Gastrocnemius medialis (tissue), 4 donors: ENCODE measurements at regions of chr14 and their contacts with region 1.

Region 1: GRCh38 chr14:72714094-72714493 is 179.8 kb downstream of the DPF3 start:
- DNase-seq: no peak
- ATAC-seq: no peak
- H3K4me3 ChIP-seq: no peak overlapping the region
- H3K27ac ChIP-seq: peak overlapping the region; percentile 90 to 94 (median 92)
- H3K4me1 ChIP-seq: peaks cover 41 to 49% of the 10 kb centered on the region in 2 donors
- H3K27me3 ChIP-seq: no peaks in the 10 kb centered on the region
- CTCF ChIP-seq: no peak
- POLR2A ChIP-seq: no peak

Region 2: DNA sequence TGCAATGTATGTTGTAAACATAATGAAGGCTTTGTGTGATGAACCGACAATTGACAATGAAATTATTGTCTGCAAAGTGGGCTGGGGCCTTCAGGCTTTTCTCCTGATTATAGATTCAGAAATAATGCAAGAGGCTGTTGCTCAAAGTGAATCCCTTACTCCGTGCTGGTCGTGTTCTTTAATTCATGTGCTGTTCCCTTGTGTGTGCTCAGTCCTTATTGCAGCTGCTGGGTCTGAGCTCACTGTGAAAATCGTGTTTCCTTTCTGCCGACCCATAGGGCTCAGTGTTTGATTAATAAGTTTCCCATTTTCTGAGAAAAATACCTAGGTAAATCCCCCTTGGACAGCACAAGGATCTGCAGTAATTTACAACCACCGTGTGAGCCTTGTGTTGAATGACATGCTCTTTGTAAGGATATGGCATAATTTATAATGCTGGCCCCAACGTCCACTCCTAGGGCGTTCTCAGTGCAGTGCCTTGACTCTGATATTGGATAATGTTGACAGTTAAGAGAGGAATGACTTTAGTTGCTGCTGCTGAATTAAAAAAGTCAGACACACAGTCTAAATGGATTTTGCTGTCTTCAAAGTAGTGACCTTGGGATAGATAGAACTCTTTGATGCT is 700.3 kb before region 1 on chr14:
- in situ Hi-C with region 1: no loop called
- intact Hi-C with region 1: no loop called
- DNase-seq: no peak
- ATAC-seq: no peak
- H3K4me3 ChIP-seq: no peak overlapping the region
- H3K27ac ChIP-seq: no peak overlapping the region
- H3K4me1 ChIP-seq: no peaks in the 10 kb centered on the region
- H3K27me3 ChIP-seq: no peaks in the 10 kb centered on the region
- CTCF ChIP-seq: no peak
- POLR2A ChIP-seq: no peak

Region 3: GRCh38 chr14:72560331-72560730 is 153.8 kb before region 1 on chr14:
- in situ Hi-C with region 1: no loop called
- intact Hi-C with region 1: loop called (anchors 5 kb)
- DNase-seq: no peak
- ATAC-seq: no peak
- H3K4me3 ChIP-seq: no peak overlapping the region
- H3K27ac ChIP-seq: peak overlapping the region in 1 of 4 donors; percentile 10
- H3K4me1 ChIP-seq: peaks cover 32 to 45% of the 10 kb centered on the region in 2 donors
- H3K27me3 ChIP-seq: no peaks in the 10 kb centered on the region
- CTCF ChIP-seq: no peak
- POLR2A ChIP-seq: no peak

Region 4: GRCh38 chr14:72893636-72894321 is 179.7 kb after region 1 on chr14 and contains the start of gene DPF3:
- in situ Hi-C with region 1: no loop called
- intact Hi-C with region 1: loop called (anchors 2 kb)
- DNase-seq: peak; percentile 97 to 98
- ATAC-seq: peak; percentile 88 to 91
- H3K4me3 ChIP-seq: peak within 1 kb of the TSS; percentile 89 to 99 (median 96)
- H3K27ac ChIP-seq: peak within 1 kb of the TSS; percentile 91 to 94 (median 94)
- H3K4me1 ChIP-seq: peaks cover 48 to 51% of the 10 kb centered on the region in 2 donors
- H3K27me3 ChIP-seq: no peaks in the 10 kb centered on the region
- CTCF ChIP-seq: no peak
- POLR2A ChIP-seq: peak; percentile 86 to 98
- total RNA-seq, gene DPF3: 16.7 to 27.8 (median 20.3) TPM

Region 5: GRCh38 chr14:72904840-72905561 is 190.9 kb after region 1 on chr14:
- in situ Hi-C with region 1: no loop called
- intact Hi-C with region 1: loop called (anchors 2 kb)
- DNase-seq: peak; percentile 49 to 72
- ATAC-seq: peak; percentile 48 to 49
- H3K4me3 ChIP-seq: no peak overlapping the region
- H3K27ac ChIP-seq: peak overlapping the region; percentile 6 to 87 (median 31)
- H3K4me1 ChIP-seq: peaks cover 37 to 69% of the 10 kb centered on the region in 2 donors
- H3K27me3 ChIP-seq: no peaks in the 10 kb centered on the region
- CTCF ChIP-seq: peak; percentile 92 to 97 (median 95)
- POLR2A ChIP-seq: no peak